ENCODE measurements at regions of chr6 and their contacts with region 1.

Region 1: DNA sequence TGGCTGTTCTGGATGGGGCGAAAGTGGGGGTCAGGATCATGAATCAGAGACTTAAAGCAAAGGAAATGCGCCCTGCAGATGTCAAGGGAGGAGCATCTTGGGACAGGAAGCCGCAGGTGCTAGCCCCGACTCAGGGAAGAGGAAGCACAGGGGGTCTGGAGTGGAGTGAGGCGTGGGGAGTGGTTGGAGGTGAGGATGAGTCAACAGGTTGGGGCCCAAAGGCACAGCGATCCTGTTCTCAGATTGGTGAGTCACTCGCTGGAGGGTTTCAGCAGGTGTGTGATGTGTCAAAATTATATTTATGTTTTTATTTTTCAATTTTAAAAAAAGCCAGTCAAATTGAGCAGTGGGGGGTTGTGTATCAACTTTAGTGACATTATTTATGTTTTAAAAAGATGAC is 19.0 kb downstream of the PACSIN1 start:
- DNase-seq: no peak
- H3K4me3 ChIP-seq: no peak overlapping the region
- H3K27ac ChIP-seq: no peak overlapping the region
- H3K4me1 ChIP-seq: no peaks in the 10 kb centered on the region
- H3K27me3 ChIP-seq: no peaks in the 10 kb centered on the region
- CTCF ChIP-seq: no peak
- POLR2A ChIP-seq: no peak

Region 2: GRCh38 chr6:34468378-34468892 is 16.5 kb before region 1 on chr6:
- CTCF ChIA-PET with region 1: interaction called, 4 read pairs
- POLR2A ChIA-PET with region 1: interaction called, 12 read pairs
- dilution Hi-C with region 1: no loop called
- intact Hi-C with region 1: no loop called
- DNase-seq: no peak
- H3K4me3 ChIP-seq: no peak overlapping the region
- H3K27ac ChIP-seq: no peak overlapping the region
- H3K4me1 ChIP-seq: no peaks in the 10 kb centered on the region
- H3K27me3 ChIP-seq: peaks cover 5 to 11% of the 10 kb centered on the region in 2 experiments
- CTCF ChIP-seq: no peak
- POLR2A ChIP-seq: no peak

Region 3: GRCh38 chr6:34514593-34515472 is 29.9 kb after region 1 on chr6:
- CTCF ChIA-PET with region 1: no interaction called
- POLR2A ChIA-PET with region 1: no interaction called
- dilution Hi-C with region 1: no loop called
- intact Hi-C with region 1: no loop called
- DNase-seq: no peak
- H3K4me3 ChIP-seq: no peak overlapping the region
- H3K27ac ChIP-seq: no peak overlapping the region
- H3K4me1 ChIP-seq: no peaks in the 10 kb centered on the region
- H3K27me3 ChIP-seq: peaks cover 15 to 18% of the 10 kb centered on the region in 2 experiments
- CTCF ChIP-seq: no peak
- POLR2A ChIP-seq: no peak

Region 4: DNA sequence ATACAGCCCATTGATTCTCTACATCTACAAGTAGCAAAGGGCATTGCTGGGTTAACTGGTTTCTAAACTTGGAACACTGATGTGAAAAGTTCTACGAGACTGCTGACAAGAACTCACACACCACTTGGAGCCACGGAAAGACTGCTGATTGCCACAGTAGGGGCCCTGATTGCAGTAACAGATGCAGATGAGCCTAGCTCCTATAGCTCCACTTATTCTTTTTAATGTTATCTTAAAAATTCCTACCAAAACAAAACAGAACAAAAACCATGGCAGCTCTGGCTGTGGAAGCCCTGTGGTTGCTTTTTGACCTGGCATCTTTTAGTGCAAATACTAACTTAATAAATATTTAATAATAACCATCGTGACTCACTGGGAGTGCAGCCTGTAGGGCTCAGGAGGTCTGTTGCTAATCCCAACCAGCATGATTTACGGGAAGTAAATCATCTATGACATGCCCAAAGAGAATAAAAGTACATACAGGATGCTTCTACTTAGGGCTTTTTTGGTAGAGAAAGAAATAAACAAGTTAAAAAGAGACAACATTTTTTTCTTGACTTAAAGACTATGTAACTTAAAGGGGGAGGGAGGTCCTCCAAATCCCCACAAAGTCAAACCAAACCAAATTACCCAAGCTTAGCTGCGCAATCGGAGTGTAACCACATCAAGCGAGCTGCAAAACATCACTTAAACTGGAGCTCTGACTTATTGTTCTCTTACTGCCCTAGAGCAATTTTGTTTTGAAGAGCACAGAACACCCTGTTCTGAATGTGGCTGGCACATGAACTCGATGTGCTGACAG is 1116.6 kb after region 1 on chr6:
- CTCF ChIA-PET with region 1: no interaction called
- POLR2A ChIA-PET with region 1: no interaction called
- dilution Hi-C with region 1: no loop called
- intact Hi-C with region 1: no loop called
- DNase-seq: peak; percentile 88
- H3K4me3 ChIP-seq: peak overlapping the region in 1 of 3 experiments; percentile 21
- H3K27ac ChIP-seq: peak overlapping the region; percentile 96
- H3K4me1 ChIP-seq: peaks cover 72% of the 10 kb centered on the region
- H3K27me3 ChIP-seq: no peaks in the 10 kb centered on the region
- CTCF ChIP-seq: no peak
- POLR2A ChIP-seq: no peak

Measured in endothelial cell of umbilical vein (primary cell).